A673 (cell line): ENCODE measurements at regions of chr1 and their contacts with region 1.

Region 1: GRCh38 chr1:39016604-39017171 is 9.5 kb upstream of the NDUFS5 start:
- DNase-seq: no peak
- H3K4me3 ChIP-seq: no peak overlapping the region
- H3K27ac ChIP-seq: no peak overlapping the region
- H3K4me1 ChIP-seq: no peaks in the 10 kb centered on the region
- H3K27me3 ChIP-seq: no peaks in the 10 kb centered on the region
- CTCF ChIP-seq: no peak

Region 2: DNA sequence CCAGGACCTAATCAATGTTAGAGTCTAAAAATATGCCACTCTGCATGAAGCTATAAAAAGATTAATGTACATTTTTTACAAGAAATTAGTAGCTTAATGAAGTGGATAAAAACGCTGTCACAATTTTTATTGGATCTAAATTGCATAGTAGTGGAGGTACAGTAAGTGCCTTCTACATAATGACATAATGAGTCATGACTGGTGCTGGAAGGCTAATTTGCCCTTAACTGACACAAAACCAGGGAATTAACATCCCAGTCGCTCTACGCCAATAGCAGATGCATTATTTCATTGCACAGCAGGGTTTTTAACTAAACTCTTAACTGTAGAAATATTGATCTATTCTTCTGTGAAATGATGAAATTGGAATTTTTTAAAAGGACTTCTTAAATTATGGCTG is 190.4 kb before region 1 on chr1:
- CTCF ChIA-PET with region 1: no interaction called
- POLR2A ChIA-PET with region 1: no interaction called
- intact Hi-C with region 1: no loop called
- DNase-seq: peak; percentile 61
- H3K4me3 ChIP-seq: no peak overlapping the region
- H3K27ac ChIP-seq: no peak overlapping the region
- H3K4me1 ChIP-seq: peaks cover 11% of the 10 kb centered on the region
- H3K27me3 ChIP-seq: no peaks in the 10 kb centered on the region
- CTCF ChIP-seq: no peak

Region 3: DNA sequence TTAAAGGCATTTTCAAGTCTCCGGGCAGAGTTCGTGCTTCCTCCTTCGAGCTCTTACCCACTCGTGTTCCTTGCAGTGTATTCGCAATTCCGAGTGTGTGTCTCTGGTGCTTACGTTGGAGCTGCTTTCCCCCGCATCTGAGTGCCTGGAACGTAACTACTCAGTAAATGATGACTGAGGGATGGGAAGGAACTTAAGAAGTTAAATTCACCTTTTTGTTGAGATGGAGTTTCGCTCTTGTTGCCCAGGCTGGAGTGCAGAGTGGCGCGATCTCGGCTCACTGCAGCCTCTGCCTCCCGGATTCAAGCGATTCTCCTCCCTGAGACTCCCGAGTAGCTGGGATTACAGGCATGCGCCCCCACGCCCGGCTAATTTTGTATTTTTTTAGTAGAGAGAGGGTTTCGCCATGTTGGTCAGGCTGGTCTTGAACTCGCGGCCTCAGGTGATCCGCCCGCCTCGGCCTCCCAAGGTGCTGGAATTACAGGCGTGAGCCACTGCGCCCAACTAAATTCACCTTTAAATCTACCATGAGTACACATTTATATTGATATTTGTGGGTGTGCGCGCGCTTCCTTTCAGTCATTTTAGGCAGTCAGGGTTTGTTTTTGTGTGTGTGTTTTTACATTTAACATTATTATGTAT is 10.3 kb after region 1 on chr1:
- CTCF ChIA-PET with region 1: no interaction called
- POLR2A ChIA-PET with region 1: interaction called, 17 read pairs
- intact Hi-C with region 1: no loop called
- DNase-seq: peak; percentile 38
- H3K4me3 ChIP-seq: peak overlapping the region; percentile 70
- H3K27ac ChIP-seq: peak overlapping the region; percentile 81
- H3K4me1 ChIP-seq: peaks cover 12% of the 10 kb centered on the region
- H3K27me3 ChIP-seq: no peaks in the 10 kb centered on the region
- CTCF ChIP-seq: no peak